Activated CD4-positive, alpha-beta T cell treated with anti-CD3 and anti-CD28 coated beads for 36 hours (primary cell): ENCODE measurements at regions of chr9 and their contacts with region 1.

Region 1: DNA sequence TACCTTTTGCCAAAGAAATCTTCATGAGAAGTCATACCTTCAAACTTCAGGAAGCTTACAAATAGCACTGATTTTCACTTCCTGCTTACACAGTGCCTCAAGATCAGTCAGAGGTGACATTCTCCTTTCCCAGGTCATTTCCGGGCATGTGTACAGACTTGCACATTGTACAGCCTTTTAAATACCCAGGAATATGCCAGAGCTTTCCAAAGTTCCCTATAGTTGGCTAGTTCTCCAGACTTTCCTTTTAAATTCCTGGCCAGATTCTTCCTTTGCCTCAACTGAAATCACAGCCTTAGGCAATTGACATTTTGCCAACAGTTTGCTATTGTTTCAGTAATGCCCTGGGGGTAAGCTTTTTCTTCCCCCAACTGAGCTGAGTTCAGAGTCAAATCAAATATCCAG is 47.2 kb downstream of the RFX3 start:
- DNase-seq: peak; percentile 14
- ATAC-seq: peak; percentile 56
- H3K4me3 Mint-ChIP-seq: peak overlapping the region; percentile 19
- H3K27ac Mint-ChIP-seq: peak overlapping the region; percentile 95
- H3K4me1 Mint-ChIP-seq: peaks cover 72% of the 10 kb centered on the region
- H3K27me3 Mint-ChIP-seq: no peaks in the 10 kb centered on the region

Region 2: DNA sequence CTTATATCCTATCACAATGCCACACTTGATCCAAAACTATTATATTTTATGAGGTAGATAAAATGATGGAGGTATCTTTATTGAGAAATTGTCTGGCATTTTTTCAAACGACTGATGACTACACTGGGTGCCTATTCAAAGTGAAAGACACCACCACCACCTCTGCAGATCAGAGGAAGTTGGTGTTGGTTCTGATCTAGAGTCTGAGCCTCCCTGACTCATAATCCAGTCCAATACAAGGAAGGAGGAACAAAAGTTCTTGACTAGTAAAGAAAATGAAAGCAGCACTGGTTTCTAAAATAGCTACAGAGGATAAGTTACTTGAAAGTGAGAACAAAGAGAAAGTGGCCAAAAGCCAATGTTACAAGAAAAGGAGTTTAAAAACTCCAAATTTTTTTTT is 92.7 kb before region 1 on chr9:
- CTCF ChIA-PET with region 1: no interaction called
- POLR2A ChIA-PET with region 1: interaction called, 7 read pairs
- intact Hi-C with region 1: loop called (anchors 1 to 2 kb)
- DNase-seq: peak; percentile 65
- ATAC-seq: peak; percentile 100
- H3K4me3 Mint-ChIP-seq: no peak overlapping the region
- H3K27ac Mint-ChIP-seq: no peak overlapping the region
- H3K4me1 Mint-ChIP-seq: peaks cover 36% of the 10 kb centered on the region
- H3K27me3 Mint-ChIP-seq: no peaks in the 10 kb centered on the region

Region 3: GRCh38 chr9:3508521-3509291 is 30.2 kb after region 1 on chr9:
- CTCF ChIA-PET with region 1: interaction called, 3 read pairs
- POLR2A ChIA-PET with region 1: no interaction called
- intact Hi-C with region 1: loop called in 1 of 2 experiments (anchors 2 kb)
- DNase-seq: no peak
- ATAC-seq: peak; percentile 48
- H3K4me3 Mint-ChIP-seq: peak overlapping the region; percentile 41
- H3K27ac Mint-ChIP-seq: peak overlapping the region; percentile 86
- H3K4me1 Mint-ChIP-seq: peaks cover 51% of the 10 kb centered on the region
- H3K27me3 Mint-ChIP-seq: no peaks in the 10 kb centered on the region

Region 4: GRCh38 chr9:3578786-3579185 is 100.2 kb after region 1 on chr9:
- CTCF ChIA-PET with region 1: no interaction called
- POLR2A ChIA-PET with region 1: no interaction called
- intact Hi-C with region 1: loop called in 1 of 2 experiments (anchors 2 kb)
- DNase-seq: peak; percentile 37
- ATAC-seq: peak; percentile 100
- H3K4me3 Mint-ChIP-seq: no peak overlapping the region
- H3K27ac Mint-ChIP-seq: peak overlapping the region; percentile 68
- H3K4me1 Mint-ChIP-seq: peaks cover 8% of the 10 kb centered on the region
- H3K27me3 Mint-ChIP-seq: no peaks in the 10 kb centered on the region

Region 5: GRCh38 chr9:3746296-3747275 is 268.0 kb after region 1 on chr9:
- CTCF ChIA-PET with region 1: no interaction called
- POLR2A ChIA-PET with region 1: no interaction called
- intact Hi-C with region 1: loop called in 1 of 2 experiments (anchors 5 kb)
- DNase-seq: peak; percentile 72
- ATAC-seq: peak; percentile 97
- H3K4me3 Mint-ChIP-seq: no peak overlapping the region
- H3K27ac Mint-ChIP-seq: peak overlapping the region; percentile 81
- H3K4me1 Mint-ChIP-seq: peaks cover 32% of the 10 kb centered on the region
- H3K27me3 Mint-ChIP-seq: peaks cover 7% of the 10 kb centered on the region

Region 6: GRCh38 chr9:4235871-4236804 is 757.6 kb after region 1 on chr9:
- CTCF ChIA-PET with region 1: no interaction called
- POLR2A ChIA-PET with region 1: no interaction called
- intact Hi-C with region 1: loop called in 1 of 2 experiments (anchors 10 kb)
- DNase-seq: no peak
- ATAC-seq: no peak
- H3K4me3 Mint-ChIP-seq: no peak overlapping the region
- H3K27ac Mint-ChIP-seq: no peak overlapping the region
- H3K4me1 Mint-ChIP-seq: peaks cover 21% of the 10 kb centered on the region
- H3K27me3 Mint-ChIP-seq: peaks cover 3% of the 10 kb centered on the region

Region 7: GRCh38 chr9:4297151-4297785 is 818.7 kb after region 1 on chr9:
- CTCF ChIA-PET with region 1: no interaction called
- POLR2A ChIA-PET with region 1: no interaction called
- intact Hi-C with region 1: loop called in 1 of 2 experiments (anchors 10 kb)
- DNase-seq: peak; percentile 65
- ATAC-seq: peak; percentile 37
- H3K4me3 Mint-ChIP-seq: peak overlapping the region; percentile 86
- H3K27ac Mint-ChIP-seq: peak overlapping the region; percentile 86
- H3K4me1 Mint-ChIP-seq: peaks cover 45% of the 10 kb centered on the region
- H3K27me3 Mint-ChIP-seq: peaks cover 32% of the 10 kb centered on the region